ENCODE measurements at regions of chr11 and their contacts with region 1.

Region 1: DNA sequence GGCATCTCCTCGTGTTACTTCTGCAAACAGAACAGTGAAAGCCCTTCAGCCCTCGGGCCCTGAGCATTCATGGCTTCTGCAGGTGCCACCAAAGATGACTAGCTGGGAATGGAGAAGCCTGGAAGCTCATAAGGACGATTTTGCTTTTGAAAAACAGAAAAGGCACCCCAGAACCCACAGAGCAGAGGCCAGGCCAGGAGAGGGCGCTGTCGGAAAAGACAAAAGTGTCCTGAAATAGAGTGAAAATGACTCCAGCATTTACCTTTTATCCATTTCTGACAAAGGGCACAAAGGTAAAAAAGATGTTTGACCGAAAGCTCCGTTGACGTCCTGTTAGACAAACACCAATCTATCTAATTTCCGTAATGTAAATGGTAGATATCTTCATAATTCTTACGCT is 37.6 kb downstream of the ZNF195 start:
- DNase-seq: peak; percentile 66
- ATAC-seq: no peak

Region 2: DNA sequence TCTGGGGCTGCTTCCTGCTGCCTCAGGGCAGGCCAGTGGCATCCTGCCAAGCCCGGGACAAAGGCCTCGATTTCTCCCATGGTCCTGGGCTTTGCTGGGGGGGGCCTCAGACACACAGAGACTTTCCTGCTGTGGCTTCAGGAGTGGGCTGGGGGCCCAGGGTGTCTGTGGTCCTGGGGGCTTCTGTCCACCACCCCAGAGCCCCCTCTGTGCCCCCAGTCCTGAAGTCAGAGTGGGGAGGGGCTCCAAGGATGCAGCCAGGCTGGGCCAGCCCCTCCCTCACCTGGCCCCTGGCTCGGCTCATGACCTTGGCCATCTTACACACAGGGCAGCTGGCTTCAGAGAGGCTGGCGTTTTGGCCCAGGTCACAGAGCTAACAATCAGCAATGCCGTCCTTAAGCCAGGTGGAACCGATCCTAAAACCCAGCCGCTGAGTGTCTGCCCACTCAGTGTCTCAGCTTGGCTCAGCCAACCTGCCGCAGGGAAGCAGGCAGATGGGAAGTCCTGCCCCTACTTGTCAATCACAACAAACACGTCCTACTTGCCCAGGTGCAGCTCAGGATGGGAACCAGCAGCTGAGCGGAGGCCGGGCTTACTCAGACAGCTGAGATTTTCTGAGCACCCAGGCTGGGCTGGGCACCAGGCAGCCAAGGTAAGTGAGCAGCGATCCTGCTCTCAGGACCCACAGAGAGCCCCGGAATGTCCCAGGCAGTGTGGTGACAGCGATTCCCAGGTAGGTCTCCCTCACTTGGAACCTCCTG is 210.8 kb before region 1 on chr11:
- intact Hi-C with region 1: no loop called
- DNase-seq: peak; percentile 46
- ATAC-seq: no peak

Region 3: DNA sequence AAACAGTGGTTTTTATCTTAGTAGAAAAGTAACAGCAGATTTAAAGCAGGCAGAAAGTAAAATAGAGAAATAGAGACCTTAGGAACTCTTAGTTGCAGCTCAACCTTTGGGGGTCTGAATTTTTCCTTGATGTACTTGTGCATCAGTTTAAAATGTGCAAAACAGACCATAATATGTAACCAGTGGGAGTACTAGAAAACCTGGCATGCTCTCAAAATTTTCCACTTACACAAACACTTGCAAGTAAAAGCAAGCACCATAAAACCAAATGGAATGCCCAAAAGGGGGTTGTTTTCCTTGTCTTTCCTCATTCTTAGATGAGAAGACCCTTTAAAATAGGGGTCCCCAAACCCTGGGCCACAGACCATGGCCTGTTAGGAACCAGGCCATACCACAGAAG is 96.2 kb before region 1 on chr11:
- intact Hi-C with region 1: no loop called
- DNase-seq: no peak
- ATAC-seq: no peak

Region 4: DNA sequence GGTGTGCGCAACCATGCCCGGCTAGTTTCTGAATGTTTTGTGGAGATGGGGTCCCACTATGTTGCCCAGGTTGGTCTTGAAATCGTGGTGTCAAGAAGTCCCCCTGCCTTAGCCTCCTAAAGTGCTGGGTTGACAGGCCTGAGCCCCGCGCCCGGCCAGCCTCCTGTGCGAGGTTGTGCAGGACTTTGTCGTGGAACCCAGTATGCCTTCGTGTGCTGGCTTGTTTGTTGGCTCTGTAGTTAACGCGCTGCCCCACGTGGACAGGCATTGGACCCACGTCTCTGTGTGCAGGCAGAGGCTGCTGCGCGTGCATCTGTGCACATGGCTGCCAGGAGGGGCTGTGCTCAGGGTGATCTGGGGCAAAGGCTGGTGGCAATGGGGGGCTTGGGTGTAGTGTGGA is 71.5 kb after region 1 on chr11:
- intact Hi-C with region 1: loop called (anchors 5 kb)
- DNase-seq: no peak
- ATAC-seq: no peak

Region 5: DNA sequence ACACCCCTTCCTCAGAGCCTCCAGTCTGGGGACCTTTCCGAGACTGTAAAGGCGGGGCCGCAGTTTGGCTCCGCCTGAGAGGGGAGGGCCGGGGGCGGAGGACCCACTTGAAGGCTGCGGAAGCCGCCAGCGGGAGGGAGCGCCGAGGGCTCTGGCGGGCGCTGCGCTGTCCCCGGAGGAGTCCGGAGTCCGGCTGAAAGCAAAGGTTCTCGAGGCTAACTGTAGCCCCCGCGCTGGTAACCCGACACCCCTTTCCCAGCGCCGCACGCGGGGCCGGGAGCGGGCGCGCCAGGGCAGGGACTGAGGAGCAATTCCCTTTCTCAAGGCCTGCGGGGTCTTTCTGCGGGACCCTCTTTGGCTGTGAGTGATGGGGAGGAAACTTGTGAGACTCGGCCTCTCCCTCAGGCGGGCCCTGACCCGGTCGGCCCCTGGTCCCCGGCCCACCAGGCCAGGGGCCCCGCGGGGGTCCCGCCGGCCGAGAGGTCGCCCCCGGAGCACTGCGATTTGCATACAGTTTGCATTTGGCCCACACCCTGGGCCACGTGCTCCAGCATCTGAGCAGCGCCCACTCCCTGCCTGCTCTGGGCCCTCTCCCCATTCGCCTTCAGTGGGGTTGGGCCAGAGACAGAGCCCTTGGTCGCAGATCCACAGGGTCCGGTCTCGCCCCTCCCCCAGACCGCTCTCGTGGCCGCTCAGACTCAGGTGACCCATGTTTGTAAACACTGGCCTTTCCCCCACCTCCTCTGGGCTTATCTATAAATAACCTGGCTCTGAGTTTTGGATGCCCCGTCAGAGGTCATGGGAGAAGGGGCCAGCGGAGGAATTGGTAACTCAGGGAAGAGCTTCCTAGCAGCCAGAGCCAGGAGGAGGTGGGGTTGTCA is 301.0 kb after region 1 on chr11:
- intact Hi-C with region 1: no loop called
- DNase-seq: peak; percentile 93
- ATAC-seq: peak; percentile 93

Measured in Right ventricle myocardium superior (tissue), 1 donor.